Sigmoid colon (tissue), 7 donors: ENCODE measurements at regions of chr12 and their contacts with region 1.

Region 1: DNA sequence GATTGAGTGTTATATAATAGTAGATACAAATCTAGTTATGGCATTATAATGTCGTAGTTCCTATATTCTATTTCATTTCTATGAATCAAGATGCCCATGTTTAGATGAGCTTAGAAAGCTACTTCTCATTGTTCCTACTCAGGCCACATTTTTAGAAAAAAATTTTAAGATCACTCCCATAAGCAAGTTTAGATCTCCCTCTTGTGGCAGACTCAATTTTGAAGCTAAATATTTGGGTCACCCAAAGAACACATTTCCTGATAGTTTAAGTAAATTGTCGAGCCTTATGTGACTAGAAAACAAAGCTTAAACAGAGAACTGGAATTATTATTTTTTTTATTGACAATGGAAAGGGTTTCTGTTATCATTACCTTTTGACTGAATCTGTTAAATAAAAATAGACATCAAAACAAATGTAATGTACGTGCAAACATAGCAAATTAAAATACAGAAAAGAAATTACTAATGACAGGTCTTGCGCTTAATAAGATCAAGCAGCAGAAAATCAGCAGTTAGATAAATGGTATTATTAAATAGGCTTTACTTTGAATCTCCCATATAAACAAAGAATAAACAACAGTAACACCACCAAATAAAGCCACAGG is 180.2 kb downstream of the ACSS3 start:
- DNase-seq: no peak
- H3K4me3 ChIP-seq: peak overlapping the region in 1 of 4 donors; percentile 2
- H3K27ac ChIP-seq: no peak overlapping the region
- H3K4me1 ChIP-seq: no peaks in the 10 kb centered on the region
- H3K27me3 ChIP-seq: no peaks in the 10 kb centered on the region
- CTCF ChIP-seq: peak; percentile 16 to 48 (median 26)
- EP300 ChIP-seq: no peak
- POLR2A ChIP-seq: no peak

Region 2: GRCh38 chr12:80837348-80837985 is 420.6 kb before region 1 on chr12:
- intact Hi-C with region 1: loop called (anchors 10 kb)
- DNase-seq: no peak
- H3K4me3 ChIP-seq: no peak overlapping the region
- H3K27ac ChIP-seq: peak overlapping the region in 2 of 4 donors; percentile 21 to 40
- H3K4me1 ChIP-seq: peaks cover 0 to 30% (median 13%) of the 10 kb centered on the region in 4 donors
- H3K27me3 ChIP-seq: no peaks in the 10 kb centered on the region
- CTCF ChIP-seq: peak in 2 of 4 experiments; percentile 40 to 55
- EP300 ChIP-seq: no peak
- POLR2A ChIP-seq: no peak